Panc1 (cell line): ENCODE measurements at regions of chr11 and their contacts with region 1.

Region 1: DNA sequence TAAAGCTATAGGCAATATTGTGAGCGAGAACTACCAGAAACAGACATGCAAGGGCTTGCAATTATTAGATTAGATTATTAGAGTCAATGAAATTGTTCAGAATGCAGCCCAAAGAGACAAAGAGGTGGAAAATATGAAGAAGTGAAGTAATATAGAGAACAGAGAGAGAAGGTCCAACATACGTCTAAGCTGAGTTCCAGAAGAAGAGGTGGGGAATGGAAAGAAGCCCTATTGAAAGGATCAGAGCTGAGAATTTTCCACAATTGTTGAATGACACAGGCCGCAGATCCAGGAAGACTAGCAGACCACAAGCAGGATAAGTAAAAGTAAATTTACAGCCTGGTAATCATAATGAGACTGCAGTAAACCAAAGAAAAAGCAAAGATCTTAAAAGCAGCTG is 93.2 kb downstream of the EXT2 start:
- DNase-seq: no peak
- ATAC-seq: no peak
- H3K4me3 ChIP-seq: no peak overlapping the region
- H3K27ac ChIP-seq: no peak overlapping the region
- H3K4me1 ChIP-seq: 0 out of 2 replicates have a peak, but pooled peaks cover 2% of the 10 kb centered on the region
- H3K27me3 ChIP-seq: no peaks in the 10 kb centered on the region
- CTCF ChIP-seq: no peak

Region 2: DNA sequence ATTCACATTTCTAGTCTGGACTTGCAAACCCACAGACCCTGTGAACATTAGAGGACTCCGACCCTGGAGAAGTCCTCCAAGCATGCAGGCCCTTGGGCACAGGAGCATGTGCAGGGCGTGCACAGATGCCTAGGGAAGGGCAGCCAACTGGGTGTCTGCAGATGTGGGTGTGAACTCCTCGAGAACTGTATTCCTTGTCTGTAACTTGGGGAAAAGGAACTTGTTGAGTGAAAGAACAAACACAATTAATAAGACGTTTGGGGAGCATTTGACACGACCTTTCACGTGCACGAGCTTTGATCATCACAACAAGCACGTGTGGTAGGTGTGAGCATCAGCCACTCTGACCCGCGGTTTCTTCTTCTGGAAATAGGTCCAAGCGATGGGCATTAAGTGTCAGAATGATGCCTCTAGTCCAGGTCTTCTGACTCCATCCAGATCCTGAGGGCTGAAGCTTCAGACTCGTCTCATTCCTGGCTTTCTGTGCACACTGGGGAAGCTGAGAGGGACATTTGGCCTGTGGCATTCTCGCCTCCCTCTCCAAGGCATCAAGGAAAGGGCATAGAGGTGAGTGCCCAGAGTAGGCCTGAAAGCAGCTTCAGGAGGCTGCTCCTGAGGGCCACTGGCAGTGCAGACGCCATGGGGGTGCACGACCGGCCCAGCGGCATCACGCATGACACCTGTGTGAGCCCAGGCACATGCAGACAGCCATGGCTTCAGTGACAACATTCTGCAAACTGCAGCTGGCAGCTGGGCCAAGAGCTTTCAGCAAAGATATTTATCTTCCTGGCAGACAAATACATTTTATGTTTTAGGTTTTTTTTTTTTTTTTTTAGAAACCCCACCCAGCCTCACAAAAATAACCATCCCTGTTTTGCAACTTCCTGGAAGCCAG is 88.8 kb after region 1 on chr11:
- CTCF ChIA-PET with region 1: no interaction called
- POLR2A ChIA-PET with region 1: interaction called, 11 read pairs
- in situ Hi-C with region 1: no loop called
- intact Hi-C with region 1: no loop called
- DNase-seq: no peak
- ATAC-seq: 0 out of 2 replicates have a peak, but pooled peaks have one; percentile 39
- H3K4me3 ChIP-seq: no peak overlapping the region
- H3K27ac ChIP-seq: no peak overlapping the region
- H3K4me1 ChIP-seq: no peaks in the 10 kb centered on the region
- H3K27me3 ChIP-seq: no peaks in the 10 kb centered on the region
- CTCF ChIP-seq: no peak